ENCODE measurements at regions of chr16 and their contacts with region 1.

Region 1: DNA sequence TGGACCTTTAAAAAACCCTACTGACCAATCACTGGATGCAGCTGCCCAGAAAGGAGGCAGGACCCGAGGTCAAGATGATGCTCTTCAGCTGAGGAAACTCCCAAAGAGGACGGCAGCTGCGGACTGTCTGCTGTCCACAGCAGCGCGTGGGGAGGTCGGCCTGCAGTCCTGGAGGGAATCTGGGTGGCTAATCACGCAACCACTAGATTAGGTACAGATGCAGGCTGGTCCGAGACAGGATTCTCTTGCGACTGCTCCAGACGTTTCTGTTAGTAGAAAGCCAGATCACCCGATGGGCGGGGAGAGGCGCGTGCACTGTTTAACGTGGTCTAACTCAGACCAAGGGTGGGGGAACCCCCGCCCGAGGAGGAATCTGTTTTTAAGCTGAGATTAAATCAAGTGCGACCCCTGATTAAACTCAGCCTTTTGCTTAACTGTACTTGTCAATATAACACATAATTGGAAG is 8.8 kb downstream of the CTRB2 start:
- DNase-seq: peak in 1 of 3 donors; percentile 11
- ATAC-seq: no peak
- H3K4me3 ChIP-seq: no peak overlapping the region
- H3K4me1 ChIP-seq: peaks cover 11% of the 10 kb centered on the region
- CTCF ChIP-seq: no peak

Region 2: DNA sequence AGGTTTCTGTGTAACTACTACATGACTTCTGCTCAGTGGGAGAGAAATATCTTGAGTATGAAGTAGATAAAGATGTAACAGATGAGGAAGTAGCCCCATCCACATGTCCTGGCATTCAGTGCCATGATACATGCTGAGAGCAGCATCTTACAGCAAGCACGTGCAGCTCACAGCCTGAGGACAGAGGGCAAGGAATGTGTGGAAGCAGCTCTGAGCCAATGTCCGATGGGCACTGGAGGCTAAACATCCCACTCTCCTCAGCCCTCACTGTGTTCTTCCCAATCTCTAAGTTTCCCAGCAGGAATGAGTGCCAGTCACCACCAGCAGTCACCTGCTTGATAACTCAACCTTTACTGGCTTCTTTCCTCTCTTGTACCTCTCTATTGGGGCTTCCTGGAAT is 194.7 kb after region 1 on chr16:
- intact Hi-C with region 1: loop called in 1 of 2 experiments (anchors 10 kb)
- DNase-seq: no peak
- ATAC-seq: no peak
- H3K4me3 ChIP-seq: no peak overlapping the region
- H3K4me1 ChIP-seq: no peaks in the 10 kb centered on the region
- CTCF ChIP-seq: no peak

Region 3: GRCh38 chr16:75464130-75464918 is 266.2 kb after region 1 on chr16 and contains the start of gene TMEM170A:
- intact Hi-C with region 1: loop called in 1 of 2 experiments (anchors 10 kb)
- DNase-seq: peak; percentile 100
- ATAC-seq: peak; percentile 96
- H3K4me3 ChIP-seq: peak within 1 kb of the TSS; percentile 96
- H3K4me1 ChIP-seq: peaks cover 35% of the 10 kb centered on the region
- CTCF ChIP-seq: peak; percentile 100
- total RNA-seq, gene TMEM170A: 46.7 to 76.8 (median 46.7) TPM